Endothelial cell of umbilical vein (primary cell): ENCODE measurements at regions of chr18 and their contacts with region 1.

Region 1: DNA sequence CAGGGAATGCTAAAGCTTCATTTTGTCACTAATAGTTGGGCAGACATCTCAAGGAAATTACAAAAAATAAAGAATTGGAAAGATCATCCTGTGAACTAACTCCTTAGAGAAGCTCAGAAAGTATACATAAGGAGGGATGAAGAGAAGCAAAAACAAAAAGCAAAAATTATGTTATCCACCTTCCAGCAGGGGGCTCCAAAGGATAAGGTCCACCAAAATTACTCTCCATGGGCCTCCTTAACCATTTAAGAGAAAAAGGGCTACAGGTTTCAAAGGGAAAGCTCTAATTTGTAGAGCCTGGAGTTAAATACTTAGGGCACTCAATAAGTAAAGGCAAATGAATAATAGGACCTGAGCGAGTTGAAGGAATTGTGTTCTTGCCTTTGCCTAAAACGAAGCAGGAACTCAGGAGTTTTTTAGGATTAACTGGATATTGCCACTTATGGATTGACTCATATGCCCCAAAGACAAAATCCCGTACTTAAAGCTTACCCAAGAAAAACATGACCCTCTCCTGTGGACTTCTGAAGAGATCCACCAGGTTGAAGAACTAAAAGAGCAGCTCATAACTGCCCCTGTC is 1167.9 kb downstream of the DSC3 start:
- DNase-seq: peak; percentile 30
- H3K4me3 ChIP-seq: no peak overlapping the region
- H3K27ac ChIP-seq: no peak overlapping the region
- H3K4me1 ChIP-seq: no peaks in the 10 kb centered on the region
- H3K27me3 ChIP-seq: no peaks in the 10 kb centered on the region
- CTCF ChIP-seq: peak; percentile 21 to 38
- POLR2A ChIP-seq: no peak

Region 2: GRCh38 chr18:28961669-28962228 is 912.9 kb before region 1 on chr18:
- CTCF ChIA-PET with region 1: no interaction called
- POLR2A ChIA-PET with region 1: no interaction called
- dilution Hi-C with region 1: no loop called
- intact Hi-C with region 1: loop called (anchors 1 kb)
- DNase-seq: peak; percentile 43
- H3K4me3 ChIP-seq: no peak overlapping the region
- H3K27ac ChIP-seq: no peak overlapping the region
- H3K4me1 ChIP-seq: peaks cover 8% of the 10 kb centered on the region
- H3K27me3 ChIP-seq: no peaks in the 10 kb centered on the region
- CTCF ChIP-seq: peak; percentile 50 to 51
- POLR2A ChIP-seq: no peak

Region 3: DNA sequence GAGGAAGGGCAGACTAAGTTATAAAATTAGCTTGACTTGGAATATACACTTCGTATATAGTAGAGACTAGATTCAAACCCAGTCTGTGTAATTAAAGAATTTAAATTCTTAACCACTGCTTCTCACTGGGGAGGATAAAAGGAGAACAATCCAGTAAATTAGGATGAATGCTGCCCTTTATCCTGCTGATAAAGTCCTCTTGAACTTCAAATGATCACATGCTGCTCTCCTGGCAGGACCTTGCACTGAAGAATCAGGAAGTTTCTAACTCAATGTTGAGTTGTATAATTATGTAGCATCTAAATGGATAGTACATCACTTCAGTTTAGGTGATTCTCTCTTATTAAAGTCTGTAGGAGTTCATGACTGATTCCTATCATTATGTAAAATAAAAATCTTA is 11.8 kb before region 1 on chr18:
- CTCF ChIA-PET with region 1: interaction called, 12 read pairs
- POLR2A ChIA-PET with region 1: no interaction called
- dilution Hi-C with region 1: no loop called
- intact Hi-C with region 1: no loop called
- DNase-seq: no peak
- H3K4me3 ChIP-seq: no peak overlapping the region
- H3K27ac ChIP-seq: no peak overlapping the region
- H3K4me1 ChIP-seq: no peaks in the 10 kb centered on the region
- H3K27me3 ChIP-seq: no peaks in the 10 kb centered on the region
- CTCF ChIP-seq: no peak
- POLR2A ChIP-seq: no peak

Region 4: DNA sequence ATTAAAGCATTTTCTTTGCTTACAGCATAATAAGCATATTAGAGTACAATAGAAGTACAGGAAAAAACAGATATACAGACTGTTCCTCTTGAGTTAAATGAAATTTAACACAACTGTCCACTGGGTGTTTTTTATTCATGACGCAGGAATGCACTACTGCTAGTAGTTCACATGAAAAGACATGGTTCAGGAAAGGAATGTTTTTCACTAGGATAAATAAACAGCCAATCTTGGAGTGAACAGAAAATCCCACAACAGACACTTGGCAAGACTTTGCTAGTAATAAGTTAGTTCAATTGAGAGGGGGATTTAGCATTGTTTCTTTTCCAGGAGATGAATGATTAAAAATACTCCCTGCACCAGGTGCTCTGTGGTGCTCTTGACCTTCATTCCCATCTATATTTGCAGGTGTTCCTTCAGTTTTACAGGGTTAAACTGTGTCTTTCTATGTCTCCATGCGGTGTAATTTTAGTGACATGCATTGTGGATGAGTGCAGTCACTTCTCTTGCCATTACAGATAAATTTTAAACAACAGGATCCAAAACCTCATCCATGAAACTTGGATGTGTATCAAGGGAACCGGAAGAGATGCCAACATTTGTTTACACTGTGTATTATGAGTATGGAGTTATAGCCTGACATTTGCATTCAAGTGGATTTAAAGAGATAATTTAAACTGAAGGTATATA is 371.3 kb after region 1 on chr18:
- CTCF ChIA-PET with region 1: no interaction called
- POLR2A ChIA-PET with region 1: no interaction called
- dilution Hi-C with region 1: no loop called
- intact Hi-C with region 1: no loop called
- DNase-seq: no peak
- H3K4me3 ChIP-seq: no peak overlapping the region
- H3K27ac ChIP-seq: no peak overlapping the region
- H3K4me1 ChIP-seq: no peaks in the 10 kb centered on the region
- H3K27me3 ChIP-seq: no peaks in the 10 kb centered on the region
- CTCF ChIP-seq: no peak
- POLR2A ChIP-seq: no peak

Region 5: DNA sequence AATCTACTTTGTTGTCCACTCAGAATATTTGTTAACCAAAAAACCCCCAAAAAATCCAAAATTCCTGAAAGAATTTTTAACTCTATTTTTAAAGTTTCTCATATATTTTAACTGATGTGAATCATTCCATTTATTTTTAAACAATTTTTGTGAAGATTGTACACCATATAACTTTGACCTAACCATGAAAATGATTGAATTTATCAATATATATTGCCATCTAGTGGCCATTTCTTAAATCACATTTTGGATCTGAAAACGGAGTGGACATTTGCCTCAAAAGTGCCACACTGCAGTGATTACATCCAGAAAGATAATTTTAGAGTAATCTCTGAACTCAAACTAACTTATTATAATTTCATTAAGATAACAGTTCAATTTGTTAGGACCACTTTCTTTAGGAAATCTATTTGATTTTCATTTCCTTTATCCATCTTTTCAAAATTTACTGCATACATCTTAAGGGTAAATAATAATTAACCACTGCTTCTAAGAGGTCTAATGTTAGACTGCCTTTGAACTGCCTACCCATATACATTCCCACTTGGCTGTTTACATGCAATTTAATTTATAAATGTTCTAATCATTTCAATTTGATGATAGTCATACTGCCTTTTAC is 1096.8 kb after region 1 on chr18:
- CTCF ChIA-PET with region 1: interaction called, 17 read pairs
- POLR2A ChIA-PET with region 1: no interaction called
- dilution Hi-C with region 1: no loop called
- intact Hi-C with region 1: loop called (anchors 1 kb)
- DNase-seq: peak; percentile 37
- H3K4me3 ChIP-seq: no peak overlapping the region
- H3K27ac ChIP-seq: no peak overlapping the region
- H3K4me1 ChIP-seq: no peaks in the 10 kb centered on the region
- H3K27me3 ChIP-seq: no peaks in the 10 kb centered on the region
- CTCF ChIP-seq: peak in 1 of 2 donors; percentile 31
- POLR2A ChIP-seq: no peak